Activated CD8-positive, alpha-beta T cell treated with anti-CD3 and anti-CD28 coated beads for 36 hours (primary cell): ENCODE measurements at regions of chr4 and their contacts with region 1.

Region 1: DNA sequence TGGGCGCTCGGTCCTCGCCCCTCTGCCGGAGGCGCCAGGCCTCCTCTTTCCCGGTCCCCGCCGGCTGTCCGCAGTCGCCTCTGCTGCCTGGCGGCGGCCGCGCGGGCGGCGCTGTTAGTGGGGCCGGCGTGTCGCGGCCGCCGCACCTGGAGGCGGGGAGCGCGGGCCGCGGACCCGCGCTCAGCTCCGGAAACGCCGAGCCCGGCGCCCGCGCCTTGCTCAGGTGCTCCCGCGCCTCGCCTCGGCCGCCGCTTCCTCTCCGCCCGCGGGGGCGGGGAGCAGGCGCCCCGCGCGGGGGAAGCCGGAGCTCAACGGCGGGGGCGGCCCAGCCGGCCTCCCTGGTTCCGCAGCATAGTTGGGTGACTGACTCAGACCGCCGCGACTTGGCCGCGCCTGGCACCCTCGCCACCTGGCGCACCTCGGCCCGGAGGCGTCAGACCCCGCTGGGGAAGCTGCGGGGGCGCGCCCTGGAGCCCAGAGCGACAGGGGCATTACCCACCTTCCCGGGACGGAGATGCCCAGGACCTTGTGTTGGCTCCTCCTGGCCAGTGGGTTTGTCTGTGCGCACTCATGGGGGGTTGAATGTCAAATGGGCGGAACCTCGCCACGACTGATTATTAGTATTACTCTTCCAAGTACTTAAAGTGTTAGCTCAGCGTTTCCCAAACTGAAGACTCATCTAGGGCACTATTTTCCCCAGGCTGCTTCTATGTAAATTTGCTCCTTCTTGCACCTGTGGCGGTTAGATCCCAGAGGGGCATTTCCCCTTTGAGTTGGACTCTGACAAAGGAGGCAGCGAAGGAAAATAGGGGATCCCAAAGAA is at the start of gene ARAP2:
- DNase-seq: peak; percentile 85
- ATAC-seq: peak; percentile 77
- H3K4me3 Mint-ChIP-seq: peak within 1 kb of the TSS; percentile 84
- H3K27ac Mint-ChIP-seq: peak within 1 kb of the TSS; percentile 94
- H3K4me1 Mint-ChIP-seq: peaks cover 37% of the 10 kb centered on the region
- H3K27me3 Mint-ChIP-seq: no peaks in the 10 kb centered on the region
- CTCF ChIP-seq: no peak
- total RNA-seq, gene ARAP2: 30.0 to 31.0 TPM

Region 2: DNA sequence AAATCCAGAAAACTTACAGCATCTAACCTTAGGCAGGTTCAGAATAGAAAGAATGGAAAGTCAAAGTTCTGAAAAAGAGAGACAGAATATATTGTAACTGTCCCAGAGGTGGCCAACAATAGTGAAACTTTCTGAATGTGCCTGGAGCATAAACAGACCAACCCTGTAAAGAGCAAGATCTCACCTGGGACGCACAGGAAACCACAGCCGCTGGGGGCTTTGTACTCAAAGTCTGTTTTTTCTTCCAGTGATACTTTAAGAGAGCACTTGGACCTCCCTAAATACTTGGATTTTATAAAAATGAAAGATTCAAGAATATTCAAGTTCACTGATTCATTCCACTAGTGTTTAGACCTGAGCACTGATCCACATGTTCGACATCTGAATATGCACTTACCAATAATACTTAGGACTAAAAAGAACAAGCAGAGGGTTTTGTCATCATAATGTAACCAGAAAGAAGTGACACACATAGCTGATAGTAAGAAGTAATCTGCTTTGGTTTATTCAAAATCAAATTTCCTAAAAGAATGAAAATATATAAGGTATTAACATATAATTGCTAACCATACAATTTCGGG is 35.5 kb before region 1 on chr4:
- CTCF ChIA-PET with region 1: interaction called, 10 read pairs
- POLR2A ChIA-PET with region 1: no interaction called
- intact Hi-C with region 1: loop called (anchors 5 kb)
- DNase-seq: peak; percentile 75
- ATAC-seq: peak; percentile 86
- H3K4me3 Mint-ChIP-seq: peak overlapping the region; percentile 43
- H3K27ac Mint-ChIP-seq: peak overlapping the region; percentile 89
- H3K4me1 Mint-ChIP-seq: peaks cover 62% of the 10 kb centered on the region
- H3K27me3 Mint-ChIP-seq: no peaks in the 10 kb centered on the region
- CTCF ChIP-seq: no peak

Region 3: GRCh38 chr4:36255577-36255976 is 11.1 kb after region 1 on chr4:
- CTCF ChIA-PET with region 1: interaction called, 34 read pairs
- POLR2A ChIA-PET with region 1: interaction called, 25 read pairs
- intact Hi-C with region 1: no loop called
- DNase-seq: peak; percentile 81
- ATAC-seq: peak; percentile 80
- H3K4me3 Mint-ChIP-seq: peak overlapping the region; percentile 66
- H3K27ac Mint-ChIP-seq: peak overlapping the region; percentile 94
- H3K4me1 Mint-ChIP-seq: peaks cover 46% of the 10 kb centered on the region
- H3K27me3 Mint-ChIP-seq: no peaks in the 10 kb centered on the region
- CTCF ChIP-seq: no peak

Region 4: DNA sequence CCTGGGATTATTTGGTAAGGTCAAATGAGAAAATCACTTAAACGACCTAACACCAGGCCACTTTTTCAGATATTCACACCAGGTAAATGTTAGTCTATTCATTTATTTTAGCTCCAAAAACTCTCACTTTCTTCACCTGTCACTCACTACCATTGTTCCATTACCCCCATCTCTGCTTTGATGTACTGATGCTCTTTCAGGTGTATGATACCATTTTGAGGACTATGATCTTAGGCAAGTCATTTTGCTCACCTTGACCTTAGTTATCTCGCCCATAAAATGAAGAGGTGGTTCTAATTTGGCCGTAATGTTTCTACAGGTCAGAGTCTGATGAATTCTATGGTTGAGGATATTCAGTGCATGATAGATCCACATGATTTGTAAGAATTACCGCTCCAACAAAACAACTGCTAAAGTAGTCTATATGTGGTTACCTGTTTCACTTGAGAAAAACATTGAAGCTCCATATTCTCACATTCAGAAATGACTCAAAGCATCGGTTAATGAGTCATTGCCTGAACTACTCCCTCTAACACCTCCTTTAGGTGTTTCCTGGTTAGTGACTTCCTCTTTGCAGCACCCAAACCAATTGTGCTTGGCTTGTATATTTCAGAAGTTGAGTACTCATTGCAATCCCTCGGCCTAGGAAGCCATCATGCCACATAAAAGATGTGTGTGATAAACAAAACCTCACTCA is 41.5 kb after region 1 on chr4:
- CTCF ChIA-PET with region 1: interaction called, 6 read pairs
- POLR2A ChIA-PET with region 1: interaction called, 28 read pairs
- intact Hi-C with region 1: loop called (anchors 5 kb)
- DNase-seq: peak; percentile 77
- ATAC-seq: peak; percentile 93
- H3K4me3 Mint-ChIP-seq: peak overlapping the region; percentile 48
- H3K27ac Mint-ChIP-seq: peak overlapping the region; percentile 90
- H3K4me1 Mint-ChIP-seq: peaks cover 52% of the 10 kb centered on the region
- H3K27me3 Mint-ChIP-seq: no peaks in the 10 kb centered on the region
- CTCF ChIP-seq: no peak

Region 5: DNA sequence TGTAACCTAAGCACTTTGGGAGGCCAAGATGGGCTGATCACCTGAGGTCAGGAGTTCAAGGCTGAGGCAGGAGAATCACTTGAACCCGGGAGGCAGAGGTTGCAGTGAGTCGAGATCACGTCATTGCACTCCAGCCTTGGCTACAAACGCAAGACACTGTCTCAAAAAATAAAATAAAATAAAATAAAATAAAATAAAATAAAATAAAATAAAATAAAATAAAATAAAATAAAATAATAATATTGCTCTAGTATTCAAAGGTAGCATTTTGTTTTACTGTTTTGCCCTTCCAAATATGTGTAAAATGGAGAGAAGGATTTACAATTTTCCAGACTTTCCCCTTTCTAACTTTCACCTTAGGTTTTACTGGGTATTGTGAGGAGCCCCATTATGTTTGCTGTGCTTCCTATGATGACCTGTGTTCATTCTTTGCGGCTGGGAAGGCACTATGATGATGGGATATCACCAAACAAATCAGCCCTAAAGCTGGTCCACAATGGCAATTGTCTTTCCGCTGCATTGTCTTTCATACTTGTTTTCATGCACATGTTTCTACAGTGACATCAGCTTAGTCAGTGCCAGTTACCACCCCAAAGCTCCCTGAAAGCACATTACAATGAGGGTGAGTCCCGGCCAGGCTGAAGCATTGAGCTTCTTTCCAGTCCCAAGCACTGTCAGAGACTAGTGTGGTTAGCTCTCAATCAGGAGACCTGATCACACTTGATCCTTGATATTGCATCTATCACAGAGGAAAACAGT is 87.7 kb after region 1 on chr4:
- CTCF ChIA-PET with region 1: interaction called, 6 read pairs
- POLR2A ChIA-PET with region 1: interaction called, 22 read pairs
- intact Hi-C with region 1: no loop called
- DNase-seq: peak; percentile 26
- ATAC-seq: peak; percentile 76
- H3K4me3 Mint-ChIP-seq: no peak overlapping the region
- H3K27ac Mint-ChIP-seq: no peak overlapping the region
- H3K4me1 Mint-ChIP-seq: peaks cover 24% of the 10 kb centered on the region
- H3K27me3 Mint-ChIP-seq: no peaks in the 10 kb centered on the region
- CTCF ChIP-seq: no peak

Region 6: GRCh38 chr4:36399762-36400353 is 155.4 kb after region 1 on chr4:
- CTCF ChIA-PET with region 1: interaction called, 8 read pairs
- POLR2A ChIA-PET with region 1: interaction called, 3 read pairs
- intact Hi-C with region 1: loop called (anchors 10 kb)
- DNase-seq: peak; percentile 74
- ATAC-seq: peak; percentile 76
- H3K4me3 Mint-ChIP-seq: no peak overlapping the region
- H3K27ac Mint-ChIP-seq: no peak overlapping the region
- H3K4me1 Mint-ChIP-seq: peaks cover 9% of the 10 kb centered on the region
- H3K27me3 Mint-ChIP-seq: peaks cover 5% of the 10 kb centered on the region
- CTCF ChIP-seq: peak; percentile 88